Thyroid gland (tissue), 4 donors: ENCODE measurements at regions of chr19 and their contacts with region 1.

Region 1: GRCh38 chr19:38647368-38647965 is at the start of gene ACTN4:
- DNase-seq: peak; percentile 99 to 100
- H3K4me3 ChIP-seq: peak within 1 kb of the TSS; percentile 85 to 99 (median 99)
- H3K27ac ChIP-seq: peak within 1 kb of the TSS; percentile 96 to 97 (median 97)
- H3K4me1 ChIP-seq: peaks cover 29 to 36% of the 10 kb centered on the region in 2 donors
- H3K27me3 ChIP-seq: no peaks in the 10 kb centered on the region
- CTCF ChIP-seq: no peak
- POLR2A ChIP-seq: peak; percentile 98 to 100
- total RNA-seq, gene ACTN4: 191 to 479 (median 365) TPM

Region 2: DNA sequence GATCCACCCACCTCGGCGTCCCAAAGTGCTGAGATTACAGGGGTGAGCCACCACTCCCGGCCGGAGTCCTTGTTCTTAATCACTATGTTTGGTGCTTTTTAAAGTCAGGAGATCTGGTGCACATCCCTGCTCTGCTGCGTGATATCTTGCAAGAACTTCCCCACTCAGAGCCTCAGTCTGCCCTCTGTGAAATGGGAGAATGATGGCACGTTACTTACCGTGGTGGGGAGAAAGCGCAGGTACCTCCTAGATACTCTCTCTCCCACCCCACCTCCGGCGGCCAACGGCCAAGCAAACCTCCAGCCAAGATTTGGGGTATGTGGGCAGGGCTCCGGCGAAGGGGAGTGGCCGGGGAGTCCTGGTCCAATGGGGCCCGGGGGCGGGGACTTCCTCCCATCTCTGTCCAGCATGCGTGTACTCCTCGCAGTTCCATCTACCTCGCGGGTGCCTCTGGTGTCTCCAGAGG is 214.2 kb before region 1 on chr19 and contains the start of gene RYR1:
- intact Hi-C with region 1: no loop called
- DNase-seq: peak; percentile 15 to 31
- H3K4me3 ChIP-seq: no peak within 1 kb of the TSS
- H3K27ac ChIP-seq: no peak within 1 kb of the TSS
- H3K4me1 ChIP-seq: no peaks in the 10 kb centered on the region
- H3K27me3 ChIP-seq: no peaks in the 10 kb centered on the region
- CTCF ChIP-seq: no peak
- POLR2A ChIP-seq: no peak
- total RNA-seq, gene RYR1: 0.54 to 1.6 (median 0.61) TPM

Region 3: GRCh38 chr19:38685666-38686529 is 38.4 kb after region 1 on chr19:
- intact Hi-C with region 1: loop called (anchors 5 kb)
- DNase-seq: peak; percentile 49 to 50
- H3K4me3 ChIP-seq: no peak overlapping the region
- H3K27ac ChIP-seq: peak overlapping the region; percentile 98 to 100 (median 99)
- H3K4me1 ChIP-seq: peaks cover 62 to 81% of the 10 kb centered on the region in 2 donors
- H3K27me3 ChIP-seq: no peaks in the 10 kb centered on the region
- CTCF ChIP-seq: peak in 5 of 6 experiments; percentile 33 to 85 (median 51)
- POLR2A ChIP-seq: peak in 1 of 2 donors; percentile 41

Region 4: DNA sequence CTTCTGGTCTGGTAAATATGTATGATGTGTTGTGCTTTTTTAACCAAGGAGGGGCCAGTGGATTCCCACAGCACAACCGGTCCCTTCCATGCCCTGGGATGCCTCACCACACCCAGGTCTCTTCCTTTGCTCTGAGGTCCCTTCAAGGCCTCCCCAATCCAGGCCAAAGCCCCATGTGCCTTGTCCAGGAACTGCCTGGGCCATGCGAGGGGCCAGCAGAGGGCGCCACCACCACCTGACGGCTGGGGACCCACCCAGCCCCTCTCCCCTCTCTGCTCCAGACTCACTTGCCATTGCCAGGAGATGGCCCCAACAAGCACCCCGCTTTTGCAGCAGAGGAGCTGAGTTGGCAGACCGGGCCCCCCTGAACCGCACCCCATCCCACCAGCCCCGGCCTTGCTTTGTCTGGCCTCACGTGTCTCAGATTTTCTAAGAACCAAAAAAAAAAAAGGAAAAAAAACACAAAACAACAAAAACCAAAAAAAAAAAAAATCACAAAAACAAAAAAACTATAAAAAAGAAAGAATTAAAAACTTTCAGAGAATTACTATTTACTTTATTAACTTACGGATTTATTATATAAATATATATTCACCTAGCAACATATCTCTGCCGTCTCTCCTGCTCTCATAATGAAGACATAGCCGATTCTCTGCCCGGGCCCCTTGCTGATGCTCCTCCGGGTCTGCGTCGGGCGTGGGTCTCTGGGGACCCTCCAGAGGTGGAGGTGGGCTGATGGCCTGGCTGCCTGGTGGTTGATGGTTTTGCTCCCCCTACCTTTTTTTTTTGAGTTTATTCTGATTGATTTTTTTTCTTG is 82.4 kb after region 1 on chr19:
- intact Hi-C with region 1: loop called (anchors 5 kb)
- DNase-seq: peak; percentile 57 to 58
- H3K4me3 ChIP-seq: no peak overlapping the region
- H3K27ac ChIP-seq: peak overlapping the region in 1 of 3 donors; percentile 35
- H3K4me1 ChIP-seq: peaks cover 13 to 24% of the 10 kb centered on the region in 2 donors
- H3K27me3 ChIP-seq: no peaks in the 10 kb centered on the region
- CTCF ChIP-seq: peak; percentile 53 to 84 (median 62)
- POLR2A ChIP-seq: no peak